ENCODE measurements at regions of chr14 and their contacts with region 1.

Region 1: DNA sequence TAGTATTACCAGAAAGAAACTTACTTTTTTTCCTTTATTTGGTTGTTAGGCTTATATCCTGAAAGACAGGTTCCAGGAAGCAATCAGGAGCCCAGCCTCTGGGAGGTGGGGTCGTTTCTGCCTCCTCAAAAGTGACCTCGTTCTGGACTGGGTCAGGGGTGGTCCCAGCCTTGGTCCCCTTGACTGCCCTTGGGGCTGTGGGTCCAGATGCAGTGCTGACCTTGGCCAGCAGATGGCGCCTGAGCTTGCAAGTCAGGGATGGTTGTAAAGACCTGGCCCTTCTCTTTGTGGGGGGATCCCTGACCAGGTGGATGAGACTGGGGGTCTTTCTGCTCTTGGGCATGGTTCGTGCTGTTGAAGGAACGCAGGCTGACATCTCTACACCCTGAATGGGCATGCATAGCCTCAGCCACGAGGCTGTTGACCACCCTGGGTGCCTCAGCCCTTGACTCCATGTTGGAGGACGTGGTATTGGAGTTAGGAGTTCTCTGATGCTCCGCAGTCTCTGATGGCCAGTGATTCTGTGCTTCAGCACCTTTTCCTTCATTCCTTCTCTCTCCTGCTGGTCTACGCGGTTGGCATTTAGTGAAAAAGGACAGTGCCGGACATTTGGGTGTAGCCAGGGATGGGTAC is 62.4 kb downstream of the ADCK1 start:
- DNase-seq: peak; percentile 75
- H3K4me3 ChIP-seq: no peak overlapping the region
- H3K27ac ChIP-seq: no peak overlapping the region
- H3K4me1 ChIP-seq: peaks cover 11% of the 10 kb centered on the region
- H3K27me3 ChIP-seq: no peaks in the 10 kb centered on the region
- CTCF ChIP-seq: peak; percentile 98

Region 2: GRCh38 chr14:78566026-78566858 is 704.0 kb after region 1 on chr14:
- intact Hi-C with region 1: loop called (anchors 10 kb)
- DNase-seq: peak; percentile 59
- H3K4me3 ChIP-seq: peak overlapping the region; percentile 53
- H3K27ac ChIP-seq: no peak overlapping the region
- H3K4me1 ChIP-seq: peaks cover 7% of the 10 kb centered on the region
- H3K27me3 ChIP-seq: peaks cover 15% of the 10 kb centered on the region
- CTCF ChIP-seq: peak; percentile 80